ENCODE measurements at regions of chr13 and their contacts with region 1.

Region 1: GRCh38 chr13:96020155-96020575 is 33.0 kb downstream of the UGGT2 start:
- DNase-seq: peak; percentile 77
- H3K4me3 ChIP-seq: no peak overlapping the region
- H3K27ac ChIP-seq: no peak overlapping the region
- H3K4me1 ChIP-seq: peaks cover 9% of the 10 kb centered on the region
- H3K27me3 ChIP-seq: no peaks in the 10 kb centered on the region
- CTCF ChIP-seq: peak; percentile 70 to 71
- POLR2A ChIP-seq: no peak

Region 2: DNA sequence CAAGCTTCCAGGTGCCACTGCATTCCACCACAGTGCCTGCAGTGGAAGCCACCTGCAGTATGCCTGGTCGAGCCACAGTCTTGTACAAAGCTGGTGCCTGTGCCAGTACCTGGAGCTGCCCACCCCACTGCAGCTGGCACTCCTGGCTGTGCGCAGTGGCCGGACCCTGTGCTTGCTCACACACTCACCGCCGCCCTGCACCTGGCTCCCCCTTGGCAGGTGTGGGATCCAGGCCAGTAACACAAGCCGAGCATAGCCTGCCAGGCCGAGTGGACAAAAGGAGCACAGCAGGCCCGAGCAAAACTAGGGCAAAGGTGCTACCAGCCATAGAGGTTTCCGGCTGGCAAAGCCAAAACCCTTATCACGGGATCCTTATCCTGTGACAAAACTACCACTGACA is 14.5 kb after region 1 on chr13:
- CTCF ChIA-PET with region 1: interaction called, 16 read pairs
- POLR2A ChIA-PET with region 1: no interaction called
- dilution Hi-C with region 1: no loop called
- intact Hi-C with region 1: no loop called
- DNase-seq: no peak
- H3K4me3 ChIP-seq: no peak overlapping the region
- H3K27ac ChIP-seq: no peak overlapping the region
- H3K4me1 ChIP-seq: no peaks in the 10 kb centered on the region
- H3K27me3 ChIP-seq: no peaks in the 10 kb centered on the region
- CTCF ChIP-seq: no peak
- POLR2A ChIP-seq: no peak

Region 3: DNA sequence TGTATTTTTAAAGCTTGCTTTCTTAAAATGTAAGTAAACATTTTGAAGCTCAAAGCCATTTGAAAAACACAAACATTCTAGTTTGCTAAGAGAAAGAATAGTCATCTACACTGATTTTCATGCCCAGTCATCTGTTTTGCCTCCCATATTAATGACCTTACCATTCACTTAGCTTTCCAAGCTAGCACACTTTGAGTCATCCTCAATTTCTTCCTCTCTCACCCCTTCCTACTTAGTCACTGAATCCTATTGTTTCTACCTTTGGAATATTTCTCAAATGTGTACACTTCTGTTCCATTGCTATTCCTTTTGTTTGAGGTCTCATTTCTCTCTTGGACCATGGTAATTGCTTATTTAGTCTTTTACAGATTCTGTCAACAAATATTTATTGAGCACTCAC is 62.5 kb after region 1 on chr13:
- CTCF ChIA-PET with region 1: interaction called, 18 read pairs
- POLR2A ChIA-PET with region 1: no interaction called
- dilution Hi-C with region 1: no loop called
- intact Hi-C with region 1: no loop called
- DNase-seq: peak; percentile 41
- H3K4me3 ChIP-seq: no peak overlapping the region
- H3K27ac ChIP-seq: no peak overlapping the region
- H3K4me1 ChIP-seq: peaks cover 7% of the 10 kb centered on the region
- H3K27me3 ChIP-seq: peaks cover 12% of the 10 kb centered on the region in 2 experiments
- CTCF ChIP-seq: no peak
- POLR2A ChIP-seq: no peak

Region 4: DNA sequence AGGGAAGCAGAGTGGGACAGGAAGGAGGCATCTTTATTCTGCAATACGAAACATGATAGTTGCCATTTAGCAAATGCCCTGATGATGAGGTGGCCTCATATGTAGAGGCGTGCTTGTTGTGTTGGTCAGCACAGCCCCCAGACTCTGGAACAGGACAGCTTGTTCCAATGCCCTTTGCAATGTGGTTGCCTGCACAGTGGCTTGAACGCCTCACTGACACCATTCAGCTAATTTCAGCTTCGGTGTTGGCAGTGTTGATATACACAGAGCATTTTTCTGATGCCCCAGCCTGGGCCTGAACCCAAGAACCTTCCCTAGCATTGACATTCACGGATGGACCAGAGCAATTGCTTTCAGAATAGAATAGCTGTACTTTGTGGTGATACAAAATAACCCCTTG is 203.1 kb after region 1 on chr13:
- CTCF ChIA-PET with region 1: interaction called, 251 read pairs
- POLR2A ChIA-PET with region 1: no interaction called
- dilution Hi-C with region 1: no loop called
- intact Hi-C with region 1: no loop called
- DNase-seq: no peak
- H3K4me3 ChIP-seq: no peak overlapping the region
- H3K27ac ChIP-seq: no peak overlapping the region
- H3K4me1 ChIP-seq: no peaks in the 10 kb centered on the region
- H3K27me3 ChIP-seq: no peaks in the 10 kb centered on the region
- CTCF ChIP-seq: no peak
- POLR2A ChIP-seq: no peak

Region 5: GRCh38 chr13:96817336-96817941 is 797.3 kb after region 1 on chr13:
- CTCF ChIA-PET with region 1: interaction called, 400 read pairs
- POLR2A ChIA-PET with region 1: interaction called, 5 read pairs
- dilution Hi-C with region 1: no loop called
- intact Hi-C with region 1: loop called (anchors 1 kb)
- DNase-seq: peak; percentile 10
- H3K4me3 ChIP-seq: no peak overlapping the region
- H3K27ac ChIP-seq: no peak overlapping the region
- H3K4me1 ChIP-seq: no peaks in the 10 kb centered on the region
- H3K27me3 ChIP-seq: no peaks in the 10 kb centered on the region
- CTCF ChIP-seq: peak; percentile 17 to 29
- POLR2A ChIP-seq: no peak

Region 6: GRCh38 chr13:97030705-97031452 is 1010.7 kb after region 1 on chr13:
- CTCF ChIA-PET with region 1: no interaction called
- POLR2A ChIA-PET with region 1: no interaction called
- dilution Hi-C with region 1: no loop called
- intact Hi-C with region 1: loop called (anchors 2 kb)
- DNase-seq: peak; percentile 76
- H3K4me3 ChIP-seq: no peak overlapping the region
- H3K27ac ChIP-seq: no peak overlapping the region
- H3K4me1 ChIP-seq: peaks cover 19% of the 10 kb centered on the region
- H3K27me3 ChIP-seq: no peaks in the 10 kb centered on the region
- CTCF ChIP-seq: peak; percentile 29 to 33
- POLR2A ChIP-seq: no peak

Measured in endothelial cell of umbilical vein (primary cell).